ENCODE measurements at regions of chr7 and their contacts with region 1.

Region 1: DNA sequence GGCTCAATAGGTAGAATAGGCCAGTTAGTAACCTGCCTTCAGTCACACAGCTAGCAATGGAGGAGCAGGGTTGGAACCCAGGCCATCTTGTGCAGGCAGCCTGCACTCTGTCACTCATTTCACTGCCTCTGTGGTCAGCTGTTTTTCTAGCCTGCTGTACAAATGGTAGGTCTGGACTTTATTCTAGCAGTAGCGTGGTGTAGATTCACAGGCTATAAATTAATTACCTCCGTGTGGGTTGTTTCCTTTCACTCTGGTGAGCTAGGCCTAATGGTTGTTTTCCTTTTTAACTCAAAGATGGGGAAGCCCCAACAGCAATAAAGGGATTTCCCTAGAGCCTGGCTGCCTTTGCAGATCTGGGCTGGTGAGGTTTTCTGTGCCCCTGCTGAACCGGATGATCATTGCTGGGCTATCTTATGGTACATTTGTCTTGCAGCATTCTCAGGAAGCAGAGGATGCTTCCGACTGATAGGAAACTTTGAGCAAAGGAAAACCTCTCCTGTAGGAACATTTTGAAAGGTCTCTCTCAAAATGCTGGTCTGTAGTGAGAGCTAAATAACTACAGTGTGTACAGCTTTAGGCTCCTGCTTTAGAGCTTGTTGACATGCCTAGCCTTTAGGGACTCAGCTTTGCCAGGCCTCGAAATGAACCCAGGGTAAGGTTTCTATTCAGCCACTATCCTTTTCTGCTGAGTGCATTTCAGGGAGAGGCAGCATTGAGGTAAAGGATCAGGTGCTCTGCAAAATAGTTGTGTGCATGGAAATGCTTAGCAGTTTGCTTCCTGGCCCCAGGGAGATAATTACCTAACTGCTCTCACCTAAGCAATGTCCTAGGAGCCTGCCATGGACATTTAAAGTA is 157.4 kb downstream of the ST7 start:
- DNase-seq: peak; percentile 69
- ATAC-seq: peak; percentile 97
- H3K4me3 Mint-ChIP-seq: no peak overlapping the region
- H3K27ac Mint-ChIP-seq: peak overlapping the region; percentile 14
- H3K4me1 Mint-ChIP-seq: peaks cover 34% of the 10 kb centered on the region
- H3K27me3 Mint-ChIP-seq: no peaks in the 10 kb centered on the region

Region 2: DNA sequence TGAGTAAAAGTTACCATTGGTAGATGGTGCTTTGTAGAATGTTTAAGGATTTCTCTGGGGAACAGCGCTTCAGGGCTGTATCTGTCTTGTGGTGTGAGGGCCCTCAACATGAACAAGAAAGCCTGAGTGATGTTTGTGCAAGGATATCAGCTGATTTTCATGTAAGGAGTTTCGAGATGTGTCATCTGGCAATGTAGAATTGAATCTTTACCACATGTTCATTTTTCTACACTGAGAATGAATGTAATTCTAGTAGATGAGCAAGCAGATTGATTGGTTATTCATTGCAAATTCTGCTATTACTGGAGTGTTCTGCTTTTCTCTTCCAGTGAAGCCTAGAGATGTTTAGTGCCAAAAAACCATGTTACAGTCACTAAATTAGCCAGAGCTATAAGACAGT is 69.7 kb before region 1 on chr7:
- CTCF ChIA-PET with region 1: no interaction called
- POLR2A ChIA-PET with region 1: no interaction called
- intact Hi-C with region 1: loop called in 1 of 2 experiments (anchors 5 kb)
- DNase-seq: no peak
- ATAC-seq: peak; percentile 88
- H3K4me3 Mint-ChIP-seq: no peak overlapping the region
- H3K27ac Mint-ChIP-seq: no peak overlapping the region
- H3K4me1 Mint-ChIP-seq: peaks cover 9% of the 10 kb centered on the region
- H3K27me3 Mint-ChIP-seq: no peaks in the 10 kb centered on the region

Region 3: DNA sequence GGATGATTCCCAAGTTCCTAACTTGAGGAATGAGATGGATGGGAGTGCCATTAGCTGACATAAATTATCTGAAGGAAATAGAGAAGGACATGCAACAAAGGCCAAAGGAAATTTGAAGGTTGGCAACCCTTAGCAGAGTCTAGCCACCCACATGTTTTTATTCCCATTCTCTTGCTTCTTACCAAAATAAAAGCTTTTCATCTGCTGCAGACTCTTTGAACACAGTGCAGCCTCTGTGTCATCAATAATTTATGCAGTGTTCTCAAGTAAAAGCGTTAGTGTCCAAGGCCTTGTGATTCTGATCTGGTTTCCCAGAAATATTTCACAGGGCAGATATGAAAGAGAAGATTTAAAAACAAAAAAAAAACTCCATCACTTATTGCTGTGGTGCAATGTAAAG is 58.9 kb before region 1 on chr7:
- CTCF ChIA-PET with region 1: no interaction called
- POLR2A ChIA-PET with region 1: no interaction called
- intact Hi-C with region 1: no loop called
- DNase-seq: no peak
- ATAC-seq: no peak
- H3K4me3 Mint-ChIP-seq: no peak overlapping the region
- H3K27ac Mint-ChIP-seq: no peak overlapping the region
- H3K4me1 Mint-ChIP-seq: peaks cover 26% of the 10 kb centered on the region
- H3K27me3 Mint-ChIP-seq: no peaks in the 10 kb centered on the region